ENCODE measurements at regions of chrX and their contacts with region 1.

Region 1: GRCh38 chrX:78103623-78104446 is at the start of gene PGK1:
- DNase-seq: peak; percentile 94 to 97
- H3K4me3 ChIP-seq: peak within 1 kb of the TSS; percentile 66
- H3K4me3 Mint-ChIP-seq: peak within 1 kb of the TSS; percentile 88
- H3K27ac Mint-ChIP-seq: peak within 1 kb of the TSS; percentile 85
- H3K4me1 ChIP-seq: no peaks in the 10 kb centered on the region
- H3K4me1 Mint-ChIP-seq: peaks cover 13% of the 10 kb centered on the region
- H3K27me3 ChIP-seq: no peaks in the 10 kb centered on the region
- H3K27me3 Mint-ChIP-seq: no peaks in the 10 kb centered on the region
- CTCF ChIP-seq: no peak
- total RNA-seq, gene PGK1: 391 and 425 TPM in 2 replicates

Region 2: GRCh38 chrX:77785486-77786364 is 318.1 kb before region 1 on chrX and contains the start of gene ATRX:
- CTCF ChIA-PET with region 1: no interaction called
- POLR2A ChIA-PET with region 1: no interaction called
- intact Hi-C with region 1: loop called (anchors 10 kb)
- DNase-seq: peak; percentile 75 to 78
- H3K4me3 ChIP-seq: peak within 1 kb of the TSS; percentile 43
- H3K4me3 Mint-ChIP-seq: peak within 1 kb of the TSS; percentile 98
- H3K27ac Mint-ChIP-seq: peak within 1 kb of the TSS; percentile 100
- H3K4me1 ChIP-seq: peaks cover 4% of the 10 kb centered on the region; the same call in 1 of the 2 replicates
- H3K4me1 Mint-ChIP-seq: no peaks in the 10 kb centered on the region
- H3K27me3 ChIP-seq: no peaks in the 10 kb centered on the region
- H3K27me3 Mint-ChIP-seq: no peaks in the 10 kb centered on the region
- CTCF ChIP-seq: no peak
- total RNA-seq, gene ATRX: 61.2 and 71.4 TPM in 2 replicates